ENCODE measurements at regions of chr12 and their contacts with region 1.

Region 1: DNA sequence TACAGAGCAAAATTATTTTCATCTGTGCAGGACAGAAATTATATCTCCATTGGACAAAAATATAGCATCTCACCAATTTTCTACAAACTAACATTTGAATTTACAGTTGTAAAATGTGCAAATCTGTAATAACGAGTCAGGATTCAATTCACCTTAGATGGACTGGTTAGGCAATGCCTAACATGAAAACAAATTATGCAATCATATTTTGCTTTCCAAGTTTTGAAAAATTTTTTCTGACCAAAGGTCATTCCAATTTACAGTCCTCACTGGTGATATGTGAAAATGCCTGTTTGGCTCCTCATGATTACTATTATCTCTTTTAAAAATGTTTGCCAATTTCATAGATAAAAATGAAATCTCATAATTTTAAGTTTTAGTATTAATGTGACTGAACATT is 6.5 kb upstream of the CPM start:
- DNase-seq: no peak
- ATAC-seq: no peak
- H3K4me3 ChIP-seq: no peak overlapping the region
- H3K27ac ChIP-seq: no peak overlapping the region
- H3K4me1 ChIP-seq: peaks cover 0 to 3% of the 10 kb centered on the region in 2 donors
- H3K27me3 ChIP-seq: no peaks in the 10 kb centered on the region
- CTCF ChIP-seq: no peak

Region 2: GRCh38 chr12:68695454-68695853 is 244.1 kb before region 1 on chr12:
- intact Hi-C with region 1: no loop called
- DNase-seq: no peak
- ATAC-seq: no peak
- H3K4me3 ChIP-seq: no peak overlapping the region
- H3K27ac ChIP-seq: no peak overlapping the region
- H3K4me1 ChIP-seq: no peaks in the 10 kb centered on the region
- H3K27me3 ChIP-seq: no peaks in the 10 kb centered on the region
- CTCF ChIP-seq: no peak

Region 3: DNA sequence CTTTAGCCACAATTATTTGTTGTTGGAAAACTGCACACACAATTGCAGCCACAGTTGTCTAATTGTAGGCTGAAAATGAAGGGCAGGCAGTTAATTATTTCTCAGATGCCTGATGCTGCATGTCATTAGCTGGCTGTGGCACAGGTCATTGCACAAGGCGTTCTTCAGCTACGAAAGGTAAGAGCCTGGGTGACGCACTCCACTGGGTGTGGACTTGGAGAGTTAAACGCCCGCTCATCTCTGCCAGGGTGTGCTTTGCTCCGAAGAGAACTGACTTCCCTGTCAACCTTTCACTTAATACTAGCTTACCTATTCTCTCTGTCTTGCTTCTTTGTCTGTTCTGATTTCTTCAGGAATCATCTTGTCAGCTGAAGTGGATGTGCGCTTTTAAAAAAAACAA is 84.9 kb after region 1 on chr12:
- intact Hi-C with region 1: no loop called
- DNase-seq: peak in 3 of 4 donors; percentile 69 to 89 (median 78)
- ATAC-seq: peak; percentile 97
- H3K4me3 ChIP-seq: no peak overlapping the region
- H3K27ac ChIP-seq: peak overlapping the region; percentile 47 to 71
- H3K4me1 ChIP-seq: peaks cover 0 to 4% of the 10 kb centered on the region in 2 donors
- H3K27me3 ChIP-seq: no peaks in the 10 kb centered on the region
- CTCF ChIP-seq: no peak

Region 4: GRCh38 chr12:69173368-69173767 is 233.9 kb after region 1 on chr12:
- intact Hi-C with region 1: no loop called
- DNase-seq: no peak
- ATAC-seq: no peak
- H3K4me3 ChIP-seq: no peak overlapping the region
- H3K27ac ChIP-seq: no peak overlapping the region
- H3K4me1 ChIP-seq: no peaks in the 10 kb centered on the region
- H3K27me3 ChIP-seq: no peaks in the 10 kb centered on the region
- CTCF ChIP-seq: no peak

Region 5: DNA sequence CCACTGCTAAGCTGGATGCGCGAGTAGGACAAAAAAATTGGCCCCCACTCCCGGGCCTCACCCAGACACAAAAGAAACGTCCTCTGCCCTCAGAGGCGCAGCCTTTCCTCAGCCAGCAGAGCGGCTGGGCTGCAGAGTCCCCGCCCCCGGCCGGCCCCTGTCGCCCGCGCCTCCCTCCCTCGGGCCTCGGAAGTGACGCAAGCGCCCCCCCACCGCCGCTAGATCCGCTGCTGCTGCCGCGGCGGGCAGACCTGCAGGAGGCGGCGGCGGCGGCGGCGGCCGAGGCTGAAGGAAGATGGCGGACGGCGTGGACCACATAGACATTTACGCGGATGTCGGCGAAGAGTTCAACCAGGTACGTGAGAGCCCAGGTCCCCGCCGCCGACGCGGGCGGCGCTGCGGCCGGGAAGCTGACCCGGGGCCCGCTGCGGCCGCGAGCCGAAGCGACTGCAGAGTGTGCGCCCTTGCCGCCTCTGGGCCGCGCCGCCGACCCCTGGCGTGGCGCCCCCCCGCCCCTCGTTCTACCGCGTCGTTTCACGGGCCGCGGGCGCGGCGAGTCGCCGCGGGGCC is 299.9 kb after region 1 on chr12 and contains the start of gene CPSF6:
- intact Hi-C with region 1: loop called in 1 of 2 experiments (anchors 5 kb)
- DNase-seq: peak; percentile 90 to 100 (median 96)
- ATAC-seq: peak; percentile 99
- H3K4me3 ChIP-seq: peak within 1 kb of the TSS; percentile 66 to 82
- H3K27ac ChIP-seq: peak within 1 kb of the TSS; percentile 91 to 93
- H3K4me1 ChIP-seq: peaks cover 7 to 50% of the 10 kb centered on the region in 2 donors
- H3K27me3 ChIP-seq: no peaks in the 10 kb centered on the region
- CTCF ChIP-seq: peak in 1 of 2 donors; percentile 17
- polyA plus RNA-seq, gene CPSF6: 125 to 161 (median 131) TPM

Measured in left lung (tissue), 14 donors.